Calu3 (cell line): ENCODE measurements at regions of chr6 and their contacts with region 1.

Region 1: GRCh38 chr6:143510991-143511891 is at the start of gene FUCA2:
- DNase-seq: peak; percentile 84
- H3K4me3 Mint-ChIP-seq: peak within 1 kb of the TSS; percentile 90
- H3K27ac Mint-ChIP-seq: peak within 1 kb of the TSS; percentile 91
- H3K4me1 Mint-ChIP-seq: peaks cover 18% of the 10 kb centered on the region
- H3K27me3 Mint-ChIP-seq: peaks cover 4% of the 10 kb centered on the region
- CTCF ChIP-seq: no peak
- total RNA-seq, gene FUCA2: 45.5 and 53.7 TPM in 2 replicates

Region 2: GRCh38 chr6:143205991-143206390 is 305.2 kb before region 1 on chr6:
- CTCF ChIA-PET with region 1: no interaction called
- intact Hi-C with region 1: no loop called
- DNase-seq: no peak
- H3K4me3 Mint-ChIP-seq: no peak overlapping the region
- H3K27ac Mint-ChIP-seq: no peak overlapping the region
- H3K4me1 Mint-ChIP-seq: peaks cover 7% of the 10 kb centered on the region
- H3K27me3 Mint-ChIP-seq: no peaks in the 10 kb centered on the region
- CTCF ChIP-seq: no peak

Region 3: DNA sequence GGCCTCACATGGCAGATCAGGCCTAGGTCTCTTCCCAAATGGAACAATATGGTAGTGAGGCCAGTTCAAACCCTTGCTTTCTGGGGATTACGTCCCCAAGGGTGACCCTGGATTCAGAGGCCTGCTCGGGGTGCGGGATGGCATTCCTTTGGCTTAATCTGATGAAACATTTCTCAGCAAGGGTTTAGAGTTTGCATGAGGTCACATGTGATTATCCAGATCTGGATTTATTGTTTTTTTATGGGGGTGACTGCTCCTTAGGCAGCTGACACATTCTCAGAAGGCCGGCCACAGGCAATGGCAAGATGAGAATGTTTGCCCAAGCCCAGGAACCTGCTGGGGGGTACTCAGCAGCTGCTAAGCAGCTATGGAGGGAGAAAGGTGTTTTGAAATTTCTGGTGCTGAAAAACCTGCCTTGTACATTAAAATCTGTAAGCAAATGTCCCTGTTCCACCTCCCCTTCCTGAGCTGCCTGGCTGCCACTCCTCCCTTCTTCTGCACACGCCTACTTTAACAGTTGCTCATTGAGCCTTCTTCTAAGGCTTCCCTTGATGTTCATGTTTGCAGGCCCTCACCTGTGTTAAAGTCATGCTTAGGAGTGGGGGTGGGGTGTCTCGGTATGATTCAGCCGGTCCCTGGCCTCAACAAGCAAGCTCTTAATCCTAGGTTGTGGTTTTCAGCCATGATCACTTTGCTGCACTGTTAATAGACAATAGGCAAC is 38.1 kb after region 1 on chr6:
- CTCF ChIA-PET with region 1: no interaction called
- intact Hi-C with region 1: no loop called
- DNase-seq: no peak
- H3K4me3 Mint-ChIP-seq: no peak overlapping the region
- H3K27ac Mint-ChIP-seq: no peak overlapping the region
- H3K4me1 Mint-ChIP-seq: peaks cover 33% of the 10 kb centered on the region
- H3K27me3 Mint-ChIP-seq: no peaks in the 10 kb centered on the region
- CTCF ChIP-seq: no peak

Region 4: GRCh38 chr6:143802833-143803565 is 291.8 kb after region 1 on chr6:
- CTCF ChIA-PET with region 1: no interaction called
- intact Hi-C with region 1: no loop called
- DNase-seq: no peak
- H3K4me3 Mint-ChIP-seq: no peak overlapping the region
- H3K27ac Mint-ChIP-seq: no peak overlapping the region
- H3K4me1 Mint-ChIP-seq: no peaks in the 10 kb centered on the region
- H3K27me3 Mint-ChIP-seq: no peaks in the 10 kb centered on the region
- CTCF ChIP-seq: no peak

Region 5: GRCh38 chr6:144087789-144088426 is 576.7 kb after region 1 on chr6:
- CTCF ChIA-PET with region 1: no interaction called
- intact Hi-C with region 1: loop called (anchors 5 kb)
- DNase-seq: no peak
- H3K4me3 Mint-ChIP-seq: no peak overlapping the region
- H3K27ac Mint-ChIP-seq: no peak overlapping the region
- H3K4me1 Mint-ChIP-seq: no peaks in the 10 kb centered on the region
- H3K27me3 Mint-ChIP-seq: no peaks in the 10 kb centered on the region
- CTCF ChIP-seq: no peak